ENCODE measurements at regions of chr2 and their contacts with region 1.

Region 1: GRCh38 chr2:216034065-216034464 is 20.7 kb upstream of the MREG start:
- DNase-seq: peak; percentile 69
- H3K4me3 Mint-ChIP-seq: no peak overlapping the region
- H3K27ac Mint-ChIP-seq: no peak overlapping the region
- H3K4me1 Mint-ChIP-seq: peaks cover 36% of the 10 kb centered on the region
- H3K27me3 Mint-ChIP-seq: no peaks in the 10 kb centered on the region

Region 2: DNA sequence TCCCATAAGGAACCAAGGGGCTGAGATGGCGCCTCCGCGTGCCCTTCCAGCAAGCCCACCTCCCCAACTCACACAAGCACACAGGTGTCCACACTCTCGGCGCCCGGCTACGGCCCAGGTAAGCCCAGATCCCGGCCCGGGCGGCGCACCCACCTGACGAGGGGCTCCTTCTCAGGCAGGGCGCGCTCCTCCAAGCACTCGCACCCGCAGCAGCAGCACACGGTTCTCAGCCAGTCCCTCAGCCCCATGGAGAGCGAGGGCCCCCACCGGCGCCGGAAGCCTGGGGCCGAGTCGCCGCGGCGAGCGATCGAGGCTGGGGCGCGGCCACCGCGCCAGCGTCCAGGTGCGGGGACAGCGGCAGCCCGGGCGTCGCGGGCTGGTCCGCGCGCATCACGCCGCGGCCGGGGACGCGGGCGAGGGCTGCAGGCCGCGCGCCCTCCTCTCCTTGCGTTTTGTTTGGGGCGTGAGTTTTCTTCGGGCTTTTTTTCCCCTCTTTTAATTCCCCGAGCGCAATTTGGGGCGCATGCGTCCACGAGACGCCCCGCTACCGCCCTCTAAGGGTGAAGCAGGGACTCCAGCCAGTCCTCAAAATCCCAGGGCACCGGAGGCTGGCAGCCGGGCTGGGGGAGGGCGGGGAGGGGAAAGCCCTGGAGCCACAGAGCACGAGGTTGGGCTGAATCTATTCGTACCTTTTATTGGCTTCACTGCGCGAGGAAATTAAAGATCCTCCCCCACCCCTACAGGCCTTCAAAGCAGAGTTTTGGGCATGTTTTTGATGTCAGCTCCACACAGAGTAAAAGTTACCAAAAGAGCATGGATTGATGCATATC is 20.8 kb before region 1 on chr2 and contains the start of gene MREG:
- intact Hi-C with region 1: loop called (anchors 1 kb)
- DNase-seq: peak; percentile 79
- H3K4me3 Mint-ChIP-seq: peak within 1 kb of the TSS; percentile 90
- H3K27ac Mint-ChIP-seq: peak within 1 kb of the TSS; percentile 62
- H3K4me1 Mint-ChIP-seq: peaks cover 51% of the 10 kb centered on the region
- H3K27me3 Mint-ChIP-seq: no peaks in the 10 kb centered on the region
- total RNA-seq, gene MREG: 15.3 and 15.7 TPM in 2 replicates

Region 3: DNA sequence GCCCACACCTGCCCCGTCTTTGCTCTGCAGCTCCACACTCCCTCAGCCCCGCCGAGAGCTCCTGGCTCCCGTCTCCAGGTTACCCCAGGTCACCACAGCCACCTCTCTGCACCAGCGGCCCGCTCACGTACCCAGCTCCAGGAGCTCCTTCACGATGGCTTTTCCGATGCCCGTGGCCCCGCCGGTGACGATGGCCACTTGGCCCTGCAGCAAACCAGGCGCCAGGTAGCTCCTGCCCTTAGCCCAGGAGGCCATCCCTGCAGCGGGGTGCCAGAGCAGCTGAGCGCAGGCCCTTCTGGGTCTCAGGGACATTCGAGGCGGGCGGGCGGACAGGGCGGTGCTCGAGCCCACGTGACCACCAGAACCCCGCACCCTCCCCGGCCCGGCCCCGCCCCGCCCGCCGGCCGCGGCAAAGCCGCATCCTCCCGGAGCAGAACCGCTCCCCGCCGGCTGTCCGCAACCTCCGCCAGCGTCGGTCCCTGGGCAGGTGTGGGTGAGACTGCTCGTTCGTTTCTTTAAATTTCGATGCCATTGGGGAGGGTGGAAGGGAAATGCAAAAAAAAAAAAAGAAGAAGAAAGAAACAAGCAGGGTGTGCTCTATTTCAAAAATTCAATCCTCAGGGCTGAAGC is 47.5 kb after region 1 on chr2 and contains the starts of genes PECR and TMEM169:
- intact Hi-C with region 1: loop called (anchors 10 kb)
- DNase-seq: peak; percentile 73
- H3K4me3 Mint-ChIP-seq: peak within 1 kb of the TSS; percentile 92
- H3K27ac Mint-ChIP-seq: peak within 1 kb of the TSS; percentile 81
- H3K4me1 Mint-ChIP-seq: peaks cover 46% of the 10 kb centered on the region
- H3K27me3 Mint-ChIP-seq: no peaks in the 10 kb centered on the region
- total RNA-seq, gene PECR: 11.5 and 15.2 TPM in 2 replicates
- total RNA-seq, gene TMEM169: 1.3 and 1.6 TPM in 2 replicates

Region 4: DNA sequence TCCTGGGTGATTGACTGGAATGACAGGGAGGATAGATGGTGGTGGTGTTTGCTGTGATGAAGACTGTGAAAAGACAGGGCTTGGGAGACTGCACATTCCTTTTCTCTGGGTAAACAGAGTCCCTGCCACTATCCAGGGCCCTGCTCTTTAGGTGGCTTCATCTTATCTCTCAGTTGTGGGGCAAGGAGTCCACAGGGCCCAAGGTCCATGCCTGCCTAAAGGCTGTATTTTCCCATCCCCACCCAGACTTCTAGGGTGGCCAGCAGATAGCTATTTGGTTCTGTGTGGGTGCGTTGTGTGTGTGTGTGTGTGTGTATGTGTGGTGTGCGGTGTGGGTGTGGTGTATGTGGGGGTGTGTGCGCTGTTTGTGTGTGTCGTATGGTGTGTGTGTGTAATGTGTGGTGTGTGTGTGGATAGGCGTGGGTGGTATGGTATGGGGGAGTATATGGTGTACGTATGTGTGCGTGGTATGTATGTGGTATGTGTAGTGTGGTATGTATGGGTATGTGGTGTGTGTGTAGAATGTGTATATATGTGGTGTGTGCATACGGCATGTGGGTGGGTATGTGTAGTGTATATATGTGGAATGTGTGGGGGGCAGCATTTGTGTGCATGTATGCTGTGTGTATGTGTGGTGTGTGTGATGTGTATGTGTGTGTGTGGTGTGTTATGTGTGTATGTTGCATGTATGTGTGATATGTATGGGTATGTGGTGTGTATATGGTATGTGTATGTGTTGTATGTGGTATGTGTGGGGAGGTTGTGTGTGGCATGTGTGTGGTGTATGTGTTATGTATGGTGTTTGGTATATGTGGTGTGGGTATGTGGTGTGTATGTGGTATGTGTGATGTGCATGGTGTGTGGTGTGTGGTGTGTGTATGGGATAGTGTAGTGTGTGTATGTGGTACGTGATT is 64.6 kb after region 1 on chr2:
- intact Hi-C with region 1: no loop called
- DNase-seq: no peak
- H3K4me3 Mint-ChIP-seq: no peak overlapping the region
- H3K27ac Mint-ChIP-seq: no peak overlapping the region
- H3K4me1 Mint-ChIP-seq: no peaks in the 10 kb centered on the region
- H3K27me3 Mint-ChIP-seq: no peaks in the 10 kb centered on the region

Region 5: DNA sequence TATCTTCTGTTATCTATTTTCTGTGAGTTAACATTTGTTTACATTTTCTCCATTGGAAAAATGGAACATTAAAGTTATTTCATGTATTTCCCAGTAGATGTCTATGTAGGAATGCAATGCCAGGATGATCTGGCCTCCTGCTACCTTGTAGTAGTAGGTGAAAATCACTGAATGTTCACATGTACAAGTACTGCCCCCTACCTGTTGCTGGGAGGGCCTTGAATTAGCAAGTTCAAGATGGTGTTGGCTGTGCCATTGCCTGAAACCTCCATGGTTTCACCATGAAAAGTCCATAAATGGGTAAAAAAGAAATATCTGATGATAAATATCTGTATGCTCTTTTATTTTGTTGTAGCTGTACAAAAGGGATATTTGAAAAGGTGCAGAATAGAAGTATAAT is 105.8 kb after region 1 on chr2:
- intact Hi-C with region 1: loop called (anchors 5 kb)
- DNase-seq: no peak
- H3K4me3 Mint-ChIP-seq: no peak overlapping the region
- H3K27ac Mint-ChIP-seq: no peak overlapping the region
- H3K4me1 Mint-ChIP-seq: peaks cover 38% of the 10 kb centered on the region
- H3K27me3 Mint-ChIP-seq: no peaks in the 10 kb centered on the region

Region 6: DNA sequence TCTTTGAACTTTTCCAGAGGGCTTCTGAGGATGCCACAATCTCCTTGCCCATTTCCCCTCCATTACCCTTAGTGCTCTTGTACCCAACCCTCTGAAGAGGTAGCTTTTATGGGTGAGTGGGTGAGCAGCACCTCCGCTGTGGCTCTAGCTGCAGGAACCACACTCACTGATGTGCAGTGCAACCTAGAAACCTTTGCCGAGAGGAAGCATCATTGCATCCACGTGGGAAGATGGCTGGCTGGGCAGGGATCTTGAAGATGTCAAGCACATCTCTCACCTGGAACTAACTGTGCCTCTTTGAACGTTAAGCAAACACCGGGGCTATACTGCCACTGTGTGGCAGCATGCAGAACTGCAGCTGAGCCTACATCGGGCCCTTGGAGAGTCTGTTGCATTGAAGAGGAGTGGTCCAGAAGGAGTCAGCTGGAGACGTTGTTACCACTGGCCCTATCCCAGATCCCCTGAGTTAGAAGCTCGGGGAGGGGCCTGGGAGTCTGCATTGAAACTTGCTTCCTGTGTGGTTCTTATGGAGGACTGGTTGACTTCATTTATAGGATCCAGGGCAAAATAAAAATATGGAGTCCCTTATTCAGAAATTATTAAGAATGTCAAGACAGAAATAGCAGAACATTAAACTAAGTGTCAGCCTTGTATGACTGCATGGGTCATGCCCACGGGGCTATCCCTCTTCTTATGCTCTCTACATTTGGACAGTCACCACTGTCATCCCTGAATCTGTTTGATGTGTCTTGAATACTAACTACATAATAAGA is 632.6 kb after region 1 on chr2:
- intact Hi-C with region 1: loop called (anchors 5 kb)
- DNase-seq: peak; percentile 59
- H3K4me3 Mint-ChIP-seq: no peak overlapping the region
- H3K27ac Mint-ChIP-seq: no peak overlapping the region
- H3K4me1 Mint-ChIP-seq: no peaks in the 10 kb centered on the region
- H3K27me3 Mint-ChIP-seq: peaks cover 8% of the 10 kb centered on the region